ENCODE measurements at regions of chr7 and their contacts with region 1.

Region 1: DNA sequence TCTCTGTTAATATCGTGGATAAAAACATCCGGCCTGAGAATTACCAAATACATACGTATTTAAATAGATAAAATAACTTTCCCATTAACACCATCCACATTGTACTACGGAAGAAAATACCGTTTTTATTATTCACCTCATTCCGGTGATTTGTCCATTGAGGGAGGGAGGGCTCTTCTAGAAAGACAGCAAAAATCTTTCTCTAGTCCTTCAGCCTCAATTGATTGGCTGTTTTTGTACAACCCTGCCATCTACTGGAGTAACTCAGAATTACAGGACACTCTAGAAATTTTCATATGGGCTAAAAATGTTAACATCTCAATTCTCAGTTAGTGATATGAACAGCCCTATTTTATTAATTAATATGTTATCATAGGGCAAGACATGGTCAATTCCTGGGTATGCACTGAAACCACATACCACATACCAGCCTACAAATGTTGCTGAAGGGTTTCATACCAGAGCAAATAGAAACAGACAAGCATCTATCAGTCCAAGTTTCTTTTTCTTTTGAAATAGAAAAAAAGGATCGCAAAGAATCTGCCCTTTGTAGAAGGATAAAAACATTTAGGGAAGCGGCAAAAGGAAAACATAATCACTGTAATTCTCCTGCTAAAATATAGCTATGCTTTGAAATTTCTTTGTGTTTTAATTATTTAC is 55.8 kb upstream of the CDCA7L start:
- DNase-seq: peak; percentile 55 to 67 (median 64)
- ATAC-seq: peak; percentile 77
- H3K4me3 ChIP-seq: no peak overlapping the region
- H3K27ac ChIP-seq: no peak overlapping the region
- H3K4me1 ChIP-seq: no peaks in the 10 kb centered on the region
- H3K27me3 ChIP-seq: peaks cover 2 to 6% of the 10 kb centered on the region in 2 experiments; a peak in 2 of 5 replicates
- CTCF ChIP-seq: peak; percentile 49 to 85 (median 65); a peak in 5 of 6 replicates
- EP300 ChIP-seq: no peak
- POLR2A ChIP-seq: no peak
- RAD21 ChIP-seq: peak; percentile 78 to 87

Region 2: GRCh38 chr7:21253740-21254687 is 747.5 kb before region 1 on chr7:
- CTCF ChIA-PET with region 1: no interaction called
- POLR2A ChIA-PET with region 1: no interaction called
- in situ Hi-C with region 1: loop called (anchors 25 kb)
- intact Hi-C with region 1: loop called (anchors 2 kb)
- DNase-seq: peak; percentile 10 to 66 (median 24)
- ATAC-seq: peak; percentile 96
- H3K4me3 ChIP-seq: no peak overlapping the region
- H3K27ac ChIP-seq: no peak overlapping the region
- H3K4me1 ChIP-seq: no peaks in the 10 kb centered on the region
- H3K27me3 ChIP-seq: peaks cover 0 to 2% of the 10 kb centered on the region in 2 experiments; a peak in 2 of 5 replicates
- CTCF ChIP-seq: peak; percentile 60 to 66 (median 62)
- EP300 ChIP-seq: no peak
- POLR2A ChIP-seq: no peak
- RAD21 ChIP-seq: peak; percentile 61 to 65

Region 3: GRCh38 chr7:21261627-21262594 is 739.6 kb before region 1 on chr7:
- CTCF ChIA-PET with region 1: no interaction called
- POLR2A ChIA-PET with region 1: no interaction called
- in situ Hi-C with region 1: loop called (anchors 25 kb)
- intact Hi-C with region 1: loop called (anchors 2 kb)
- DNase-seq: peak; percentile 22 to 56 (median 32)
- ATAC-seq: peak; percentile 98
- H3K4me3 ChIP-seq: no peak overlapping the region
- H3K27ac ChIP-seq: no peak overlapping the region
- H3K4me1 ChIP-seq: no peaks in the 10 kb centered on the region
- H3K27me3 ChIP-seq: no peaks in the 10 kb centered on the region
- CTCF ChIP-seq: peak; percentile 66 to 71 (median 67)
- EP300 ChIP-seq: no peak
- POLR2A ChIP-seq: no peak
- RAD21 ChIP-seq: peak; percentile 41 to 72; a peak in 3 of 4 replicates

Region 4: GRCh38 chr7:21412410-21412851 is 589.0 kb before region 1 on chr7:
- CTCF ChIA-PET with region 1: no interaction called
- POLR2A ChIA-PET with region 1: no interaction called
- in situ Hi-C with region 1: no loop called
- intact Hi-C with region 1: no loop called
- DNase-seq: peak in 2 of 4 experiments; percentile 15 to 20
- ATAC-seq: peak; percentile 28; the same call in 2 of the 3 replicates
- H3K4me3 ChIP-seq: no peak overlapping the region
- H3K27ac ChIP-seq: no peak overlapping the region
- H3K4me1 ChIP-seq: peaks cover 0 to 26% of the 10 kb centered on the region in 2 experiments; a peak in 3 of 5 replicates
- H3K27me3 ChIP-seq: peaks cover 0 to 11% of the 10 kb centered on the region in 2 experiments; a peak in 2 of 5 replicates
- CTCF ChIP-seq: no peak
- EP300 ChIP-seq: no peak
- POLR2A ChIP-seq: no peak
- RAD21 ChIP-seq: no peak

Region 5: GRCh38 chr7:21690705-21691104 is 310.8 kb before region 1 on chr7:
- CTCF ChIA-PET with region 1: no interaction called
- POLR2A ChIA-PET with region 1: no interaction called
- in situ Hi-C with region 1: no loop called
- intact Hi-C with region 1: loop called (anchors 10 kb)
- DNase-seq: no peak
- ATAC-seq: no peak
- H3K4me3 ChIP-seq: no peak overlapping the region
- H3K27ac ChIP-seq: no peak overlapping the region
- H3K4me1 ChIP-seq: no peaks in the 10 kb centered on the region
- H3K27me3 ChIP-seq: no peaks in the 10 kb centered on the region
- CTCF ChIP-seq: no peak
- EP300 ChIP-seq: no peak
- POLR2A ChIP-seq: no peak
- RAD21 ChIP-seq: no peak

Region 6: DNA sequence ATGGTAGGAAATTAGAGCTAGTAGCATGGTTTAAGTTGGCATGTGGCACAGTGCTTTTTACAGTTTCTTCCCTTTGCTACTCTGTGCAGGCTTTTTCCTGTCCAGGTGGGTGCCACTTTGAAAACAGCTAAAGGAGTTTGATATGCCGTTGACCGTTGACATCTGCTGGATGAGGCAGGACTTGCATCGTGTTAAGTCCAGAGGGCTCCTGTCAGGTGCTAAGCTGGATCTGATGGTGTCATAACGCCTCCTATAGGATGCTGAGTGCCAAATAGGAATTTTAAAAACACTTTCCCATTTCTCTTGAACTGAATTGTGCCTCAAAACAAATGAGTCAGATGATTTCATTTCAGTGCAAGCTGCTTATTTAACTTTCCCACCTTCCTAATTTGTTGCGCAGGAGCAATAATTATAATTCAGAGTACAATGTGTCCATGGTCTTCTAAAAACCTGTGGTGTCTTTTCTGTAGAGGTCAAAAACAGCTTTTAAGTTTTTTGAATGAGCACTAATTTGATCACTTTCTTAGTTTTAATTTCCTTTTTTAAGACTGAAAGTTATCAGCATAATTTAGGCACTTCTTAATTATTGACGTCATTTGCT is 234.1 kb before region 1 on chr7:
- CTCF ChIA-PET with region 1: no interaction called
- POLR2A ChIA-PET with region 1: no interaction called
- in situ Hi-C with region 1: no loop called
- intact Hi-C with region 1: loop called (anchors 2 kb)
- DNase-seq: peak; percentile 37 to 74 (median 52)
- ATAC-seq: peak; percentile 98
- H3K4me3 ChIP-seq: no peak overlapping the region
- H3K27ac ChIP-seq: no peak overlapping the region
- H3K4me1 ChIP-seq: peaks cover 0 to 3% of the 10 kb centered on the region in 2 experiments; a peak in 1 of 5 replicates
- H3K27me3 ChIP-seq: peaks cover 0 to 2% of the 10 kb centered on the region in 2 experiments; a peak in 1 of 5 replicates
- CTCF ChIP-seq: peak; percentile 78 to 96 (median 95)
- EP300 ChIP-seq: no peak
- POLR2A ChIP-seq: no peak
- RAD21 ChIP-seq: peak; percentile 61 to 78

Region 7: DNA sequence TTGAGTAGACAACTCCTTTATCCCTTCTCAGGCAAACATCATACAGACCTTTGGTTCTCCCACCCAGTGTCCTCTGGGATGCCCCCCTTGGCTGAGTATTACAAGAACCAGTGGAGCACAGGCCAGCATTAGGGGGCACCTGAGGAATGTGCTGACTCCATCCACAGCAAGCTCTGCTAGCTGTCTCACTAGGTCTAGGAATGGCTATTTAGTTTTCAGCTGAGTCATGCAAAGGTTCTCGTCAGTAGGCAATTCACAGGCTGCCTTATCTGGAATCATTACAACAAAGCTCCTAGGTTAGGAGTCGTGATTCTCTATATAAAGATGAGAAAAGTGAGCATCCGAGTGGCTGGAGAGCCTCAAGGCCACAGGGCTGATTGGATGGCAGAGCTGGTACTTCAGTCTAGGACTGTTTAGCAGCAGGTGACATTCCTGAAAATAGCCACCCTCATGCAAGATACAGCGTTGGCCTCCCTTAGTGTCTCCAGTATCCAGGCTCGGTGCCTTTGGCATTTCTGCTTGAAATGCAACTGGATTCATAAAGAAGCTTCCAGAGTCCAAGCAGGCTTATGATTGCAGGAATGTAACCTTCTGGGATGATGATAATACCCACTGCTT is 131.6 kb before region 1 on chr7:
- CTCF ChIA-PET with region 1: no interaction called
- POLR2A ChIA-PET with region 1: no interaction called
- in situ Hi-C with region 1: no loop called
- intact Hi-C with region 1: loop called (anchors 10 kb)
- DNase-seq: peak in 2 of 4 experiments; percentile 7 to 8
- ATAC-seq: peak; percentile 56
- H3K4me3 ChIP-seq: no peak overlapping the region
- H3K27ac ChIP-seq: no peak overlapping the region
- H3K4me1 ChIP-seq: no peaks in the 10 kb centered on the region
- H3K27me3 ChIP-seq: peaks cover 0 to 4% of the 10 kb centered on the region in 2 experiments; a peak in 2 of 5 replicates
- CTCF ChIP-seq: no peak
- EP300 ChIP-seq: no peak
- POLR2A ChIP-seq: no peak
- RAD21 ChIP-seq: no peak

Region 8: DNA sequence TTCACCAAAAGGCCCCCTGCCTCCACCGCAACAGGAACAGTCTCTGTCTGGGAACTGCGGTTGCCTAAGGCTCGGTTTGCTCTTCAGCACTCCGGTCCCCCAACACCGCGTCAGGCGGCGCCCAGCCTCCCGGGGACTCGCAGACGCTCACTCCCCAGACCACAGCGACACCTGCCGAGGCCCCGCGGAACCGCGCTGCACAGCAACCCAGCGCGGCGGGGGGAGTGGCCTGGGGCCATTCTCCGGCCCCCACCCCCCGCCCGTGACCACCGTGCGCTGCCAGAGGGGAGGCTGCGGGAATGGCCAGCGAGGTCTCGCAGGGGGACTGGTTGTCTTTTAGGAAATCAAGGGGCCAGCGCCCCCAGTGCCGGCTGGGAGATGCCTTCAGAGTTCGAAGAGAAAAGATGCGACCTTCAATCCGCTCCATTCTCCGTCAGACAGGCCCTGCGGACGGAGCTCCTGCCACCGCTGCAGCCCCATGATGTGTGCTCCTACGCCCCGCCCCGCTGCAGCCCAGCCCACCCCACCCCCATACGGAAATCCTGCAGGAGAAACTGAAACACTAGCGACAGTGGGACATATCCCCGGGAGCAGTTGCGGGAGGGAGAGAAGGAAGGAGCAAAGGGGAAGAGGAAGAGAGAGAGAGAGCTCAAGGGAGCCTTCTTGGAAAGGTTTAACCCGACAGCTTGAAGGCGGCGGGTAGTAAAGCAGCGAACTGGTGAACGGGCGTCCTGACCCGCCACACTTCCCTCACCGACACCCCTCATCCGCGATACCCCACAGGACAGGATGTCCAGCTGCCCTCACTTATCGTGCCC is 81.6 kb after region 1 on chr7:
- CTCF ChIA-PET with region 1: no interaction called
- POLR2A ChIA-PET with region 1: no interaction called
- in situ Hi-C with region 1: no loop called
- intact Hi-C with region 1: loop called (anchors 10 kb)
- DNase-seq: peak; percentile 80 to 82 (median 82)
- ATAC-seq: peak; percentile 100
- H3K4me3 ChIP-seq: peak overlapping the region; percentile 46
- H3K27ac ChIP-seq: no peak overlapping the region; the same call in 2 of the 3 replicates
- H3K4me1 ChIP-seq: peaks cover 9 to 14% of the 10 kb centered on the region in 2 experiments; a peak in 3 of 5 replicates
- H3K27me3 ChIP-seq: peaks cover 3 to 16% of the 10 kb centered on the region in 2 experiments; a peak in 2 of 5 replicates
- CTCF ChIP-seq: peak; percentile 89 to 93 (median 92)
- EP300 ChIP-seq: no peak
- POLR2A ChIP-seq: no peak
- RAD21 ChIP-seq: peak; percentile 80 to 84

Region 9: GRCh38 chr7:22771194-22771871 is 769.9 kb after region 1 on chr7:
- CTCF ChIA-PET with region 1: no interaction called
- POLR2A ChIA-PET with region 1: no interaction called
- in situ Hi-C with region 1: no loop called
- intact Hi-C with region 1: no loop called
- DNase-seq: no peak
- ATAC-seq: no peak
- H3K4me3 ChIP-seq: no peak overlapping the region
- H3K27ac ChIP-seq: no peak overlapping the region
- H3K4me1 ChIP-seq: peaks cover 0 to 7% of the 10 kb centered on the region in 2 experiments; a peak in 1 of 5 replicates
- H3K27me3 ChIP-seq: no peaks in the 10 kb centered on the region
- CTCF ChIP-seq: no peak
- EP300 ChIP-seq: no peak
- POLR2A ChIP-seq: no peak
- RAD21 ChIP-seq: no peak